AG04450 (cell line): ENCODE measurements at regions of chr1 and their contacts with region 1.

Region 1: GRCh38 chr1:155227261-155228095 is 19.0 kb downstream of the MTX1 start:
- DNase-seq: peak; percentile 98
- H3K4me3 ChIP-seq: peak overlapping the region; percentile 71
- H3K27ac ChIP-seq: peak overlapping the region; percentile 96
- H3K27me3 ChIP-seq: no peaks in the 10 kb centered on the region
- CTCF ChIP-seq: no peak; the same call in 1 of the 2 replicates

Region 2: GRCh38 chr1:155193275-155193990 is 34.0 kb before region 1 on chr1:
- CTCF ChIA-PET with region 1: interaction called, 13 read pairs
- POLR2A ChIA-PET with region 1: interaction called, 5 read pairs
- DNase-seq: peak; percentile 64
- H3K4me3 ChIP-seq: peak overlapping the region; percentile 64
- H3K27ac ChIP-seq: peak overlapping the region; percentile 87
- H3K27me3 ChIP-seq: no peaks in the 10 kb centered on the region
- CTCF ChIP-seq: peak; percentile 97

Region 3: DNA sequence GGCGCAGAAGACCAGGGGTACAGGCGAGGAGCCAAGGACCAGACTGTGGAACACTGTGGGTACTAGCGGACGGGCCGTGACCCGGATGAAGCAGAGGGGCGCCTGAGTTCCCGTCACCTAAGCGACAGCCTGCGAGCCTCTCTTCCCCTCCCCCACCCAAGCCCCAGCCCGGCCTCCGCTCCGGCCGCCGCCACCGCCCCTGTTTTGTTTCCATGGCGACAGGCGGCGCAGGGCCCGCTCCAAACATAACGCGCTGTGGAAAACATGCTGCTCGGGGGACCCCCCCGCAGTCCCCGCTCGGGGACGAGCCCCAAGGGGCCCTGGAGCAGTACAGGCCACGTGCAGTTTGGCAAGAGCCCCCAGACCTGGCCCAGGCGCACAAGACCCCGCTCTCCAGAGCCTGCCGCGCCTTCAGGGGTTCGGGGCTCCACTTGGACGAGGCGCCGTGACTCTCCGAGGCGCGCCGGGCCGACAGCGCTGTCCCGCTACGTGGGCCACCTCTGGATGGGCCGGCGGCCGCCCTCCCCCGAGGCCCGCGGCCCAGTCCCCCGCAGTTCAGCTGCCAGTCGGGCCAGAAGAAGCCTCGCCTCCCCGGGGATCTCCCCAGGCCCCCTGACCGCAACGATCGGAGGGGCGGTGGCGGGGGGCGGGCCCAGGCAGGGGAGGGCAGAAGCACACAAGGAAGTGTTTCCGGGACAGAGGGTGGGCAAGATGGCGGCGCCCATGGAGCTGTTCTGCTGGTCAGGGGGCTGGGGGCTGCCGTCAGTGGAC is 18.8 kb before region 1 on chr1 and contains the start of gene MTX1:
- CTCF ChIA-PET with region 1: interaction called, 17 read pairs
- POLR2A ChIA-PET with region 1: interaction called, 19 read pairs
- DNase-seq: no peak
- H3K4me3 ChIP-seq: peak within 1 kb of the TSS; percentile 96
- H3K27ac ChIP-seq: peak within 1 kb of the TSS; percentile 97
- H3K27me3 ChIP-seq: no peaks in the 10 kb centered on the region
- CTCF ChIP-seq: no peak
- polyA plus RNA-seq, gene MTX1: 44.6 and 62.3 TPM in 2 replicates

Region 4: DNA sequence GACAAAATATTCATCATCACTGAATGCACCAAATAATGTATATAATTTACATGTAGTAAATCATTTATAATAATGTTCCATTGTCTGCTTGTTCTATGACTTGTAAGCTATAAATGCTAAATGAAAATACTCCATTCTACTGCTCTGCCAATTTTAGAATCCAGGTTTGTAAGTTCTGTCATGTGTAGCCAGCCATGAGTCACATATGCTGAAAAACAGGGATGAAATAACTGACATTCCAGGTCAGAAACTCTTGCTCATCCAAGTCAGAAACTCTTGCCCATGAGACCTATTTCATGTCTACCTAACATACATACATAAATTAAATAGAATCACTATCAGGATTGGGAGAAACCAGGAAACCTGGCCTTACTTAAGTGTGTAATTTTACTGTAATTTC is 239.5 kb after region 1 on chr1:
- CTCF ChIA-PET with region 1: no interaction called
- POLR2A ChIA-PET with region 1: interaction called, 13 read pairs
- DNase-seq: peak; percentile 59
- H3K4me3 ChIP-seq: no peak overlapping the region
- H3K27ac ChIP-seq: no peak overlapping the region
- H3K27me3 ChIP-seq: no peaks in the 10 kb centered on the region
- CTCF ChIP-seq: no peak